ENCODE measurements at regions of chr1 and their contacts with region 1.

Region 1: GRCh38 chr1:26233903-26234643 is at the start of gene CEP85:
- DNase-seq: peak; percentile 94
- ATAC-seq: peak; percentile 88
- H3K4me3 Mint-ChIP-seq: peak within 1 kb of the TSS; percentile 98
- H3K27ac Mint-ChIP-seq: peak within 1 kb of the TSS; percentile 94
- H3K4me1 Mint-ChIP-seq: peaks cover 34% of the 10 kb centered on the region
- H3K27me3 Mint-ChIP-seq: no peaks in the 10 kb centered on the region
- CTCF ChIP-seq: no peak
- total RNA-seq, gene CEP85: 13.8 and 16.4 TPM in 2 replicates

Region 2: DNA sequence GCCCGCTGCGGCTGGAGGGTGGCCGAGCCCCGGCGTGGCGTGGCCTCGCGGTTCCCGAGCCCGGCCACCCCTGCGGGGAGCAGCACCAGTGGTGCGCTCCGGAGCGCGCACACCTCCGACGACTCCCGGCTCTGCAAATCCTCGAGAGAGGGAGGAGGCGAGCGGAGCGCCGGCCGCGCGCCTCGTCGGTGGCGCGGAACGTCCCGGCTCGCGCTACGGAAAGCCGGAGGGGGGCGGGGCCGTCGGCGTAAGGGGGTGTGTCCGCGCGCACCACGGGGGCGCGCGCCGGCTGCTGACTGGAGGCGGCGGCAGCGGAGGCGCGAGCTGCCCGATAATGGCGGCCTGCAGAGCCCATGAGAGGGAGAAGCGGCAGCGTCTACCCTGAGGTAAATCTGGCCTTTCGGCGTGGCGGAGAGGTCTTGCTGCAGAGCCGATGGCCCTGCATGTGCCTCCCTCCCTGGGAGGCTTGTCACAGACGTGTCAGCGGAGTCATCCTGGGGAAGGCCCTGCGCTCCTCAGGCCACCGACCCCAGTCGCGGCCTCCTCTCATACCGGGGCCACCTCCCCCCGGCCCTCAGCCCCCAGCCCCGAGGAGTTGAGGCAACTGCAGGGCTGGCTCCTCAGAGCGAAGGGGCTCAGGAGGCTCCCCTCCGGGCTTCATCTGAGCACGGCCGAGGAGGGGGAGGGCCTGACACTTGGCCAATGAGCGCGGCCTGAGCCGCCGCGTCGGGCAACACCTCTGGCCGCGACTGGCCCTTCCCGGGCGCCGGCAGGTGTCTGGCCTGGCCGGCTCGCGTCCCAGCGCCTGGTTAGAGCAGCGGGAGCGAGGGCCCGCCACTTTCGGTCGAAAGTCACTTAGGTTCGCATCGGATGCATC is 122.3 kb before region 1 on chr1 and contains the start of gene PDIK1L:
- CTCF ChIA-PET with region 1: interaction called, 3 read pairs
- POLR2A ChIA-PET with region 1: no interaction called
- intact Hi-C with region 1: loop called (anchors 1 kb)
- DNase-seq: peak; percentile 90
- ATAC-seq: peak; percentile 80
- H3K4me3 Mint-ChIP-seq: peak within 1 kb of the TSS; percentile 94
- H3K27ac Mint-ChIP-seq: peak within 1 kb of the TSS; percentile 89
- H3K4me1 Mint-ChIP-seq: peaks cover 20% of the 10 kb centered on the region
- H3K27me3 Mint-ChIP-seq: no peaks in the 10 kb centered on the region
- CTCF ChIP-seq: no peak
- total RNA-seq, gene PDIK1L: 9.4 and 10.5 TPM in 2 replicates

Region 3: GRCh38 chr1:26154750-26155149 is 79.3 kb before region 1 on chr1:
- CTCF ChIA-PET with region 1: no interaction called
- POLR2A ChIA-PET with region 1: no interaction called
- intact Hi-C with region 1: no loop called
- DNase-seq: no peak
- ATAC-seq: no peak
- H3K4me3 Mint-ChIP-seq: no peak overlapping the region
- H3K27ac Mint-ChIP-seq: no peak overlapping the region
- H3K4me1 Mint-ChIP-seq: no peaks in the 10 kb centered on the region
- H3K27me3 Mint-ChIP-seq: peaks cover 30% of the 10 kb centered on the region
- CTCF ChIP-seq: no peak

Region 4: DNA sequence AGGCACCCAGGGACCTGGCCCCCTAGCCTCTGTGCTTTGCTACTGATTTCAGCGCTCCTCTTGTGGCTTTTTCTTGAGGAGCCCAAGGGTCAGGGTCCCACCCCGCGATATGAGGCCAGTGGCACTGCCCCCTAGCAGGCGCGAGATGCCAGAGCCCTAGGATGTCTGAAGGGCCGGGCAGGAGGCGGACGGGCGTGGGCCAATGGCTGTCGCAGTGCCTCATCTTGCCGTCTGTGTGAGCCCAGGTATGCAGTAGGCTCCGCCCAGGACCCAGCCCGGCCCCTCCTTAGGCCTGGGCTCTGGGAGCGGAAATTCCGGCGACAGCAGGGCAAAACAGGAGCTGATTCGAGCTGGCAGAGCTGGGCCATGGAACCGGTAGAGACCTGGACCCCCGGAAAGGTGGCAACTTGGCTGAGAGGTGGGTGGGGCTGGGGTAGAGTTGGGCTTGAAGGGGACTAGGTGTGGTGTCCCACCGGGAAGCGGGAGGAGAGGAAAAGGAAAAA is 56.8 kb before region 1 on chr1 and contains the start of gene CNKSR1:
- CTCF ChIA-PET with region 1: no interaction called
- POLR2A ChIA-PET with region 1: no interaction called
- intact Hi-C with region 1: no loop called
- DNase-seq: no peak
- ATAC-seq: no peak
- H3K4me3 Mint-ChIP-seq: no peak within 1 kb of the TSS
- H3K27ac Mint-ChIP-seq: no peak within 1 kb of the TSS
- H3K4me1 Mint-ChIP-seq: no peaks in the 10 kb centered on the region
- H3K27me3 Mint-ChIP-seq: no peaks in the 10 kb centered on the region
- CTCF ChIP-seq: no peak
- total RNA-seq, gene CNKSR1: 2.7 and 4.8 TPM in 2 replicates

Region 5: GRCh38 chr1:26195805-26196204 is 38.3 kb before region 1 on chr1:
- CTCF ChIA-PET with region 1: no interaction called
- POLR2A ChIA-PET with region 1: no interaction called
- intact Hi-C with region 1: no loop called
- DNase-seq: no peak
- ATAC-seq: no peak
- H3K4me3 Mint-ChIP-seq: no peak overlapping the region
- H3K27ac Mint-ChIP-seq: no peak overlapping the region
- H3K4me1 Mint-ChIP-seq: no peaks in the 10 kb centered on the region
- H3K27me3 Mint-ChIP-seq: peaks cover 3% of the 10 kb centered on the region
- CTCF ChIP-seq: no peak

Region 6: DNA sequence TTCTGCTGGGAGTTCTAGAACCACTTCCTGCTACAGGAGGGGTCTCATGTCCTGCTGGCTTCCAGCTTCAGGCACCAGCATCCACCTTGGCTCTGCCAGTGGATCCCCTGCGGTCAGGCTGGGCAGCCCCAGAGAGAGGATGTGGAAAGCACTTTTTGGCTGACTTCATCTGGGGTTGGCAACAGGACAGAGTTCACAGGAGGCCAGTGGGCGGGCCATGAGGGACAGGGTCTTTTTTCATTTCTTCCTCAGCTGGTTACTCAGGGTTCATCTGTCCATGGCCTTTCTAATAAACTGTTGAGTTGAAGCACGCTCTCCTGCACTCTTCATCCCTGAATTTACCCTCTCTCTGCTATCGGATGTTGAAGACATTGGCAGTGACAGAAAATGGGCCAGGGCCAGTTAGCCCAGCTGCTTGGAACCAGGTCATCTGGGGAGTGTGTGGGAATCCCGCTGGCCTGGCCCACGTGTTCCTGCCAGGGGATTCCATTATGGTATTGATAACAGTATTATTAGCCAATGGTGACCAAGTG is 340.7 kb after region 1 on chr1:
- CTCF ChIA-PET with region 1: no interaction called
- POLR2A ChIA-PET with region 1: no interaction called
- intact Hi-C with region 1: no loop called
- DNase-seq: no peak
- ATAC-seq: no peak
- H3K4me3 Mint-ChIP-seq: no peak overlapping the region
- H3K27ac Mint-ChIP-seq: no peak overlapping the region
- H3K4me1 Mint-ChIP-seq: no peaks in the 10 kb centered on the region
- H3K27me3 Mint-ChIP-seq: no peaks in the 10 kb centered on the region
- CTCF ChIP-seq: no peak